ENCODE measurements at regions of chr12 and their contacts with region 1.

Region 1: DNA sequence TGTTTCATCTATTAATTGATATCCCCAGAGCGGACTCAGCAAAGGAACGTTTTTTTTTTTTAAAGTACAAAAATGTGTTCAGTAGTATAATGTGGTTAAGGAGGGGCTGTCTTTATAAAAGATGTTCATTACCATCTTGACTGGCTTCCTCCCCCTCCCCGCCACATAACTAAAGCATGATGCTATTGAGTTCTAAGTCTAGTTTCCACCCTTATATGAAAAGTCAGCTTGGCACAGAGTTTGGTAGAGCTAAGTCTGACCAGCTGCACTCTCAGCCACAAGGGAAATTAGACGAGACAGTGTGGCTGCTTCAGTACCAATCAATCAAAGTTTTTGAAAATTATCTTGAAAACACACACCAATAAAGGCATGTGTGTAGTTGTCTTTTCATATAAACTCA is 1.9 kb upstream of the MYBPC1 start:
- DNase-seq: no peak
- ATAC-seq: no peak
- H3K4me3 ChIP-seq: peak overlapping the region; percentile 15
- H3K27ac ChIP-seq: peak overlapping the region; percentile 88
- H3K4me1 ChIP-seq: peaks cover 24% of the 10 kb centered on the region
- H3K27me3 ChIP-seq: no peaks in the 10 kb centered on the region
- CTCF ChIP-seq: no peak

Region 2: DNA sequence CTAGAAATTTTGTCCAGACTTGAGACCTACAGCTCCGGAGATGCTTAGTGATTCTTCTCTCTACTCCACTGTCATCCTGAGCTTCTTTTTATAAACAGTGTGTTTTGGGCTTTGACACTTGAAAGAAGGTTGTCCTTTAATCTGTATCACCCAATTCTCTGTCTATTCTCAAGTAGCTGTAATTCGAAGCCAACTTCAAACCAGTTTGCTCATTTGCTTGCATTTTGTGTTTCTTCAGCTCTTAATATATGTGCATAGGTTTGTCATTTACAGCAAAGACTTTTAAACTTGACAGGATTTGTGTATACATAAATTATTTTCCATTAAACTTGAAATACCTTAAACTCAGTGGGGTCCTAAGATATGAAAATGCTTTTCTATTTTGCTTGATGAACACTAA is 14.5 kb before region 1 on chr12:
- intact Hi-C with region 1: loop called in 1 of 2 experiments (anchors 2 kb)
- DNase-seq: no peak
- ATAC-seq: no peak
- H3K4me3 ChIP-seq: no peak overlapping the region
- H3K27ac ChIP-seq: no peak overlapping the region
- H3K4me1 ChIP-seq: peaks cover 11% of the 10 kb centered on the region
- H3K27me3 ChIP-seq: no peaks in the 10 kb centered on the region
- CTCF ChIP-seq: no peak

Region 3: DNA sequence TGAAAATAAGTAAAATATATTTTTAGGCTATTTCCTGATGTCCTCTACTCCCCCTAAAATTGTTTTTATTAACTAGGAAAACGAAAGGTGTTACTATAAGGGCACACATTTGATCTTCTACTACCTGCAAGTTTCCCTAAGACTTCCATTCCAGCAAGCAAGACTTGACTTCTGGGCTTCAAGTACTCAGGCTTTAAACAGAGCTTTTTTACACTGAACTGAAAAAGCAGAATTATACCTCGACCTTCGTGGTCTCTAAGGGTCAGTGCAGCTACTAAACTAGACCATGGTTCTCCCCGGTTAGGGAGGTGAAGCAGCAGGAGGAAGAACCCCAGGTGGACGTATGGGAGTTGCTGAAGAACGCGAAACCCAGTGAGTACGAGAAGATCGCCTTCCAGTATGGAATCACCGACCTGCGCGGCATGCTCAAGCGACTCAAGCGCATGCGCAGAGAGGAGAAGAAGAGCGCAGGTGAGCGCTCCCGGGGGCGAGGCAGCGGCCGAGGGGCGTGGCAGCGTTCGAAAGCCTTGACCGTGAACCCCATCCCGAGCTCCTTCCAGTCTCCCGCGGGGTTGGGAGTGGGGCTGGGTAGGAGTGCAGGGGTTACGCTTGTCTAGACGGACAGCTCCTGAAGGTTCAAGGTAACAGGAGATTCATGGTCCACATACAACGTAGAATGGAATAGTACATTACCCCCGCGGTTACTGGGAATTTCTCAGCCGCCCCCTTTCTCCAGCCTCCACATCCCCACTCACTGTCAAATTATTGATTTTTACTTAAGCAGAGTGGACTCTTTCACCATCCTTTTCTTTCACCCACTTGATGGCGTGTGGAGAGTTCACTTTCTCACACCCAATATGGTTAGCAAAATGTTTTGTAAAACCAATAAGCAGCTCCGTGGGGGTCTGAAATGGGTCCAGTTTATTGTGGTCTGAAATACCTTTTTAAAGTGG is 49.5 kb after region 1 on chr12:
- intact Hi-C with region 1: no loop called
- DNase-seq: peak in 1 of 2 donors; percentile 49
- ATAC-seq: peak in 3 of 4 donors; percentile 21 to 42 (median 27)
- H3K4me3 ChIP-seq: no peak overlapping the region
- H3K27ac ChIP-seq: peak overlapping the region; percentile 54
- H3K4me1 ChIP-seq: peaks cover 12% of the 10 kb centered on the region
- H3K27me3 ChIP-seq: no peaks in the 10 kb centered on the region
- CTCF ChIP-seq: no peak

Measured in psoas muscle (tissue), 8 donors.